Prostate gland (tissue), 2 donors: ENCODE measurements at regions of chr6 and their contacts with region 1.

Region 1: GRCh38 chr6:132122871-132123270 is 171.7 kb upstream of the CCN2 start:
- DNase-seq: no peak
- H3K4me3 ChIP-seq: no peak overlapping the region
- H3K27ac ChIP-seq: no peak overlapping the region
- H3K4me1 ChIP-seq: no peaks in the 10 kb centered on the region
- H3K27me3 ChIP-seq: no peaks in the 10 kb centered on the region
- CTCF ChIP-seq: no peak
- POLR2A ChIP-seq: no peak

Region 2: GRCh38 chr6:131721161-131721560 is 401.7 kb before region 1 on chr6:
- intact Hi-C with region 1: no loop called
- DNase-seq: no peak
- H3K4me3 ChIP-seq: no peak overlapping the region
- H3K27ac ChIP-seq: no peak overlapping the region
- H3K4me1 ChIP-seq: no peaks in the 10 kb centered on the region
- H3K27me3 ChIP-seq: no peaks in the 10 kb centered on the region
- CTCF ChIP-seq: no peak
- POLR2A ChIP-seq: no peak

Region 3: DNA sequence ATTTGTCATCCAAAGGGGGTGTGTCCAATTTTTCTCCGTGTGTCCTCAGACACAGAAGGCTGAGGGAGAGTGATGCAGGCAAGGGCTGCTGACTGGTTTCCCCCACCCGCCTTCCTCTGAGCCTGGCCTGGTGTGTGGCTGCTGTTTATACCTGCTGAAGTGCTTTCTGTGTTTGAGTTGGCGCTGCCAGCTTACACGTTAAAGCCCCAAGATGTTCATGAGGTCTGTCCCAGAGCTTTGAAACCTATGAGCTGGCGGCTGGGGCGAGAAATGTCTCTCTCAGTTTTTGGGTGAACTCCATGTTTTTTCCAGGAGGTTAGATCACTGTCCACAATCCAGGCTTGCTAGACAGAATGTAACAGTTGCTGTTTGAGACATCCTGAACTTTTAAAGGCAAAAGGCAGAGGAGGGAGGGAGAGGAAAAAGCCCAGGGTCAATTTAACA is 102.7 kb before region 1 on chr6:
- intact Hi-C with region 1: loop called (anchors 10 kb)
- DNase-seq: peak; percentile 19
- H3K4me3 ChIP-seq: no peak overlapping the region
- H3K27ac ChIP-seq: peak overlapping the region; percentile 25 to 58
- H3K4me1 ChIP-seq: no peaks in the 10 kb centered on the region
- H3K27me3 ChIP-seq: no peaks in the 10 kb centered on the region
- CTCF ChIP-seq: no peak
- POLR2A ChIP-seq: no peak